CD8-positive, alpha-beta memory T cell (primary cell): ENCODE measurements at regions of chr6 and their contacts with region 1.

Region 1: DNA sequence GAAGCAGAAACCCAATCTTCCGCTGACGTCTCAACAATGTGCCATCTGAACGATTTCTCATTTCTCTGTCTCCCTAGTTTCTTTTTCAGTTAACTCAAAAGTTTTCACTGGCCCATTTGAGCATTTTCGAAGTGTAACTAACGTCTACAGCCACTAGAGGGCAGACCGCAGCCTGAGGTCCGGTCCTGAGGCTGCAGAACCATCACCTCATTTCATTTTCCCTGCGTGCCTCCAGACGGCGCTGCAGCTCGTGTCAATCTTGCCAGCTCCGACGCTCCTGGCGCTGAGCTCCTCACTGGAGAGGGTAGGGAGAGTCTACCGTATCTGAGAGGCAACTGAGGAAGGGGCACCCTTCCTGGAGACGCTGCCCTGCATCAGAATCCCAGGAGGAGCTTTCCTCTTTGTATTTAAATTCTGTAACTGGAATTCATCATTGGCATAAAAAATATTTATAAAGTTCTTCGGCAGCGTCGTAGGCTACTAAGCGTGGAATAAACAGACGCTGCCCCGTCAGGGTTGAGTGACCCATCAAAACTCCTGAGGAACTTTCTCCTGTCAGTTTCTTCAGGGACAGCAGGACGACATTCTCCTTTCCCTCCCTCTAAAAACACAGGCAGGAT is 28.5 kb upstream of the DTNBP1 start:
- DNase-seq: peak; percentile 63 to 81 (median 72)
- H3K4me3 ChIP-seq: no peak overlapping the region
- H3K4me3 Mint-ChIP-seq: peak overlapping the region in 1 of 7 donors; percentile 1
- H3K27ac ChIP-seq: no peak overlapping the region
- H3K27ac Mint-ChIP-seq: peak overlapping the region in 4 of 8 donors; percentile 1 to 56 (median 14)
- H3K4me1 ChIP-seq: peaks cover 3% of the 10 kb centered on the region
- H3K4me1 Mint-ChIP-seq: peaks cover 6 to 9% (median 7%) of the 10 kb centered on the region in 3 donors
- H3K27me3 ChIP-seq: no peaks in the 10 kb centered on the region
- H3K27me3 Mint-ChIP-seq: peaks cover 6 to 30% of the 10 kb centered on the region in 2 donors

Region 2: GRCh38 chr6:15299430-15300131 is 391.8 kb before region 1 on chr6:
- CTCF ChIA-PET with region 1: no interaction called
- POLR2A ChIA-PET with region 1: no interaction called
- DNase-seq: peak; percentile 12 to 64 (median 20)
- H3K4me3 ChIP-seq: no peak overlapping the region
- H3K4me3 Mint-ChIP-seq: peak overlapping the region; percentile 8 to 65 (median 48)
- H3K27ac ChIP-seq: peak overlapping the region; percentile 51
- H3K27ac Mint-ChIP-seq: peak overlapping the region; percentile 15 to 92 (median 82)
- H3K4me1 ChIP-seq: peaks cover 67% of the 10 kb centered on the region
- H3K4me1 Mint-ChIP-seq: peaks cover 74 to 86% (median 82%) of the 10 kb centered on the region in 3 donors
- H3K27me3 ChIP-seq: no peaks in the 10 kb centered on the region
- H3K27me3 Mint-ChIP-seq: no peaks in the 10 kb centered on the region

Region 3: GRCh38 chr6:15621203-15622044 is 69.9 kb before region 1 on chr6:
- CTCF ChIA-PET with region 1: no interaction called
- POLR2A ChIA-PET with region 1: no interaction called
- DNase-seq: no peak
- H3K4me3 ChIP-seq: no peak overlapping the region
- H3K4me3 Mint-ChIP-seq: no peak overlapping the region
- H3K27ac ChIP-seq: peak overlapping the region; percentile 36
- H3K27ac Mint-ChIP-seq: peak overlapping the region in 4 of 8 donors; percentile 2 to 35 (median 16)
- H3K4me1 ChIP-seq: peaks cover 12% of the 10 kb centered on the region
- H3K4me1 Mint-ChIP-seq: peaks cover 19 to 52% (median 41%) of the 10 kb centered on the region in 3 donors
- H3K27me3 ChIP-seq: no peaks in the 10 kb centered on the region
- H3K27me3 Mint-ChIP-seq: no peaks in the 10 kb centered on the region

Region 4: GRCh38 chr6:15715060-15715459 is 23.7 kb after region 1 on chr6:
- CTCF ChIA-PET with region 1: no interaction called
- POLR2A ChIA-PET with region 1: no interaction called
- DNase-seq: no peak
- H3K4me3 ChIP-seq: no peak overlapping the region
- H3K4me3 Mint-ChIP-seq: no peak overlapping the region
- H3K27ac ChIP-seq: no peak overlapping the region
- H3K27ac Mint-ChIP-seq: peak overlapping the region in 1 of 8 donors; percentile 6
- H3K4me1 ChIP-seq: no peaks in the 10 kb centered on the region
- H3K4me1 Mint-ChIP-seq: no peaks in the 10 kb centered on the region
- H3K27me3 ChIP-seq: no peaks in the 10 kb centered on the region
- H3K27me3 Mint-ChIP-seq: peaks cover 9 to 16% of the 10 kb centered on the region in 2 donors

Region 5: DNA sequence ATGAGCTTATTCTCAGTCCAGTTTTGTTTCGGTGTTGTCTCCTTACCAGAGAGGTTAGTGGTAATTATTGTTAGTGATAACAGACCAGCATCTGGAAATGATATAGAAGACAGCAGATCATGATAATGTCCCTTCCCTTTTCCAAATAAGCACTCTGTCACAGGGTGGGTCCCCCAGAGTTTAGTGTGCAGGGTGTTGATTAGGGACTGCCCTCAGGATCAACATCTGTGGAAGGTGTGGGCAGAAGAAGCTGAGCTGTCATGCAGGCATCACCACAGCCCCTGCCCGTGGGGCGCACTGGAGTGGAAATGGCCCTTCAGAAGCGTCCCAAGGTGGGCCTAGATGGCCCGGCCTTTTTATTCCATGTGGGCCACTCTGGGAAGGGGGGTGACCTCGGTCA is 39.1 kb after region 1 on chr6:
- CTCF ChIA-PET with region 1: no interaction called
- POLR2A ChIA-PET with region 1: no interaction called
- DNase-seq: no peak
- H3K4me3 ChIP-seq: no peak overlapping the region
- H3K4me3 Mint-ChIP-seq: no peak overlapping the region
- H3K27ac ChIP-seq: no peak overlapping the region
- H3K27ac Mint-ChIP-seq: no peak overlapping the region
- H3K4me1 ChIP-seq: no peaks in the 10 kb centered on the region
- H3K4me1 Mint-ChIP-seq: peaks cover 2 to 3% (median 2%) of the 10 kb centered on the region in 3 donors
- H3K27me3 ChIP-seq: no peaks in the 10 kb centered on the region
- H3K27me3 Mint-ChIP-seq: peaks cover 0 to 6% of the 10 kb centered on the region in 2 donors

Region 6: GRCh38 chr6:16128759-16129622 is 437.6 kb after region 1 on chr6 and contains the start of gene MYLIP:
- CTCF ChIA-PET with region 1: interaction called, 10 read pairs
- POLR2A ChIA-PET with region 1: no interaction called
- DNase-seq: peak; percentile 96 to 97 (median 97)
- H3K4me3 ChIP-seq: peak within 1 kb of the TSS; percentile 93
- H3K4me3 Mint-ChIP-seq: peak within 1 kb of the TSS; percentile 94 to 99 (median 96)
- H3K27ac ChIP-seq: peak within 1 kb of the TSS; percentile 82
- H3K27ac Mint-ChIP-seq: peak within 1 kb of the TSS; percentile 93 to 100 (median 97)
- H3K4me1 ChIP-seq: peaks cover 30% of the 10 kb centered on the region
- H3K4me1 Mint-ChIP-seq: peaks cover 34 to 50% (median 38%) of the 10 kb centered on the region in 3 donors
- H3K27me3 ChIP-seq: no peaks in the 10 kb centered on the region
- H3K27me3 Mint-ChIP-seq: peaks cover 0 to 3% of the 10 kb centered on the region in 2 donors
- total RNA-seq, gene MYLIP: 7.7 to 9.0 TPM

Region 7: DNA sequence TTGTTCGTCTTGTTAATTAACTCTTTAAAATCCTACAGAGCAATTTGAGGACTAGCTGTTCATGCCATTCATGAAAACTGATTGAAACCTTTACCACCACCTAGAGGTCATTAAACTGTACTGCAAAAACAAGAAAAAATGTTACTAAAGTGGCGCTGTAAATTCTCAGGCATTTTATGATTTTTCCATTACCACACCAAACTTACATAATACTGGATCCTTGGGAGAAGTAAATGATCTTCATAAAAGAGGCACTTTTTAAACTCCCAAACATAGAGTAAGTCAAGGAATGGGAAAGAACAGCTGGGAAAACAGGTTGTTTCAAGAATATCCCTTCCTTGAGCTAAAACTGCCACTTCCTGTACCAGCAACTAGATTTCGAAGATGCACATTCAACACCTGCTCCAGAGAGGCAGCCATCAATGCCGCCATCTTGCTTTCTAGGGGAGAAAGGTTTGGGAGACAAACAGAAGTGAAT is 491.9 kb after region 1 on chr6:
- CTCF ChIA-PET with region 1: interaction called, 54 read pairs
- POLR2A ChIA-PET with region 1: no interaction called
- DNase-seq: peak in 2 of 5 donors; percentile 32 to 41
- H3K4me3 ChIP-seq: no peak overlapping the region
- H3K4me3 Mint-ChIP-seq: no peak overlapping the region
- H3K27ac ChIP-seq: no peak overlapping the region
- H3K27ac Mint-ChIP-seq: peak overlapping the region in 5 of 8 donors; percentile 6 to 66 (median 21)
- H3K4me1 ChIP-seq: peaks cover 21% of the 10 kb centered on the region
- H3K4me1 Mint-ChIP-seq: peaks cover 30 to 43% (median 32%) of the 10 kb centered on the region in 3 donors
- H3K27me3 ChIP-seq: no peaks in the 10 kb centered on the region
- H3K27me3 Mint-ChIP-seq: peaks cover 2 to 5% of the 10 kb centered on the region in 2 donors

Region 8: GRCh38 chr6:16200321-16200883 is 509.0 kb after region 1 on chr6:
- CTCF ChIA-PET with region 1: interaction called, 48 read pairs
- POLR2A ChIA-PET with region 1: no interaction called
- DNase-seq: no peak
- H3K4me3 ChIP-seq: no peak overlapping the region
- H3K4me3 Mint-ChIP-seq: no peak overlapping the region
- H3K27ac ChIP-seq: no peak overlapping the region
- H3K27ac Mint-ChIP-seq: no peak overlapping the region
- H3K4me1 ChIP-seq: no peaks in the 10 kb centered on the region
- H3K4me1 Mint-ChIP-seq: no peaks in the 10 kb centered on the region
- H3K27me3 ChIP-seq: no peaks in the 10 kb centered on the region
- H3K27me3 Mint-ChIP-seq: peaks cover 12 to 40% of the 10 kb centered on the region in 2 donors

Region 9: GRCh38 chr6:16206595-16207037 is 515.3 kb after region 1 on chr6:
- CTCF ChIA-PET with region 1: interaction called, 48 read pairs
- POLR2A ChIA-PET with region 1: no interaction called
- DNase-seq: peak; percentile 7 to 54 (median 42)
- H3K4me3 ChIP-seq: no peak overlapping the region
- H3K4me3 Mint-ChIP-seq: no peak overlapping the region
- H3K27ac ChIP-seq: no peak overlapping the region
- H3K27ac Mint-ChIP-seq: no peak overlapping the region
- H3K4me1 ChIP-seq: no peaks in the 10 kb centered on the region
- H3K4me1 Mint-ChIP-seq: peaks cover 0 to 4% (median 2%) of the 10 kb centered on the region in 3 donors
- H3K27me3 ChIP-seq: no peaks in the 10 kb centered on the region
- H3K27me3 Mint-ChIP-seq: peaks cover 4 to 39% of the 10 kb centered on the region in 2 donors